Dorsolateral prefrontal cortex (tissue), 120 donors: ENCODE measurements at regions of chr20 and their contacts with region 1.

Region 1: DNA sequence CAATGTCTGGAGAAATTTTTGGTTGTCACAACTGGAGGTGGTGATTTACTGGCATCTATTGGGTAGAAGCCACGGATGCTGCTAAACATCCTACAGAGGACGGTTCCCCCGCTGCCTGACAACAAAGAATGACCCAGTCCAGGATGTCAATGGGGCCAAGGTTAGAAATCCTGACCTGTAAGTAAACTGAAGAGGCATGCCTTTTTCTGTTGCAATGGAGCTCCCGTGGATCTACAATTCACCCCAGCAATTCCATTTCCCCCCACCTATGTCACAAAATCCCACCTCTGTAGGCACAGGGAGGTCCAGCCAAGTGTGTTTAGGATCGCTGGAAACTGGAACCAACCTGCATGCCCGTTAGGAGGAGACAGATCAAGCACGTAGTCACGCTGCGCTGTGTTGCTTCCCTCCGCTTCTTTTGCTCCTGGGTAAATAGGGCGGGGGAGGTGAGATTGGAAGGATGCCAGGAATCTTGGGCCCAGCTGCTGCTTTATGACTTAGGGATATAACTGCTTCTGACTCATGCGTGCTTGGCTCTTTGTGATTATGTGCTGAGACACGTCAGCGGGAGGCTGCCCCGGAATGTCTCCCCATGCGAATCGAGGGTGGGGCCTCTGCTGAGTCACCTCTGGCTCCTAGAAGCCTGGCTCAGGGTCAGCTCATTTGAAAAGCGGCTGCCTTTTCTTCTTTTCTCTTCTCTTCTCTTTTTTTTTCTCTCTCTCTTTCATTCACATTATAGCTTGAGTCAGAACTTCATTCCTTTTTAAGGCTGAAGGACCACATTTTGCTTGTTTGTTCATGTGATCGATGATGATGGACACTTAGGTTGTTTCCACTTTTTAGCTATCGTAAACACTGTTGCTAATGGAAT is 12.4 kb upstream of the PEDS1 start:
- DNase-seq: peak; percentile 34 to 97 (median 88)
- H3K4me3 ChIP-seq: peak overlapping the region; percentile 3 to 65 (median 38)
- H3K27ac ChIP-seq: peak overlapping the region in 57 of 59 donors; percentile 29 to 93 (median 85)
- H3K27me3 ChIP-seq: no peaks in the 10 kb centered on the region
- CTCF ChIP-seq: peak in 10 of 56 donors; percentile 9 to 37 (median 24)

Region 2: GRCh38 chr20:50077818-50078604 is 87.9 kb before region 1 on chr20:
- intact Hi-C with region 1: no loop called
- DNase-seq: peak in 4 of 10 donors; percentile 21 to 31 (median 26)
- H3K4me3 ChIP-seq: no peak overlapping the region
- H3K27ac ChIP-seq: no peak overlapping the region
- H3K27me3 ChIP-seq: no peaks in the 10 kb centered on the region
- CTCF ChIP-seq: no peak

Region 3: GRCh38 chr20:50120897-50121693 is 44.8 kb before region 1 on chr20:
- intact Hi-C with region 1: loop called (anchors 1 to 2 kb)
- DNase-seq: peak; percentile 18 to 81 (median 77)
- H3K4me3 ChIP-seq: peak overlapping the region in 2 of 59 donors; percentile 4 to 15
- H3K27ac ChIP-seq: peak overlapping the region in 37 of 59 donors; percentile 11 to 81 (median 59)
- H3K27me3 ChIP-seq: no peaks in the 10 kb centered on the region
- CTCF ChIP-seq: peak; percentile 67 to 98 (median 89)

Region 4: DNA sequence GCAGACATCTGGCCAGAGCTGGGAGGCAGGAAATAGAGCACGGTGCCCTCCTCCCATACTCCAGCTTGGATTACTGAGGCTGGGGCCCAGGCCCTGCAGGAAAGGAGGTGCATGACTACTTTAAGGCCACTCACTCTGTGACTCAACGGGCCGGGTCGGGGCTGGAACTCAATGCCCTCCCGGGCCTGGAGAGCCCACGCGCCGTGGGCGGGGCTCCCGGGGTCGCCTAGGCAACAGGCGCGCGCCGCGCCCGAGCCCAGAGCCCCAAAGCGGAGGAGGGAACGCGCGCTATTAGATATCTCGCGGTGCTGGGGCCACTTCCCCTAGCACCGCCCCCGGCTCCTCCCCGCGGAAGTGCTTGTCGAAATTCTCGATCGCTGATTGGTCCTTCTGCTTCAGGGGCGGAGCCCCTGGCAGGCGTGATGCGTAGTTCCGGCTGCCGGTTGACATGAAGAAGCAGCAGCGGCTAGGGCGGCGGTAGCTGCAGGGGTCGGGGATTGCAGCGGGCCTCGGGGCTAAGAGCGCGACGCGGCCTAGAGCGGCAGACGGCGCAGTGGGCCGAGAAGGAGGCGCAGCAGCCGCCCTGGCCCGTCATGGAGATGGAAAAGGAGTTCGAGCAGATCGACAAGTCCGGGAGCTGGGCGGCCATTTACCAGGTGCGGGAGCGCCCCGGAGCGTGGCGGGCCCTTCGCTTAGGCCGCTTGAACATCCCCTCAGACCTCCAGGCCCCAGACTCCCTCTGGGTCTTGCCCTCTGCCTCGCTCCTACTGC is 344.2 kb after region 1 on chr20 and contains the start of gene PTPN1:
- intact Hi-C with region 1: no loop called
- DNase-seq: peak; percentile 96 to 99 (median 98)
- H3K4me3 ChIP-seq: peak within 1 kb of the TSS; percentile 48 to 100 (median 98)
- H3K27ac ChIP-seq: peak within 1 kb of the TSS in 56 of 59 donors; percentile 0 to 96 (median 76)
- H3K27me3 ChIP-seq: no peaks in the 10 kb centered on the region
- CTCF ChIP-seq: peak in 34 of 56 donors; percentile 5 to 58 (median 28)
- total RNA-seq, gene PTPN1: 15.9 to 29.2 (median 22.0) TPM